ENCODE measurements at regions of chr11 and their contacts with region 1.

Region 1: GRCh38 chr11:43895601-43896000 is 15.0 kb downstream of the ALKBH3 start:
- DNase-seq: no peak
- H3K4me3 ChIP-seq: no peak overlapping the region
- H3K27ac ChIP-seq: no peak overlapping the region
- H3K4me1 ChIP-seq: no peaks in the 10 kb centered on the region
- H3K27me3 ChIP-seq: no peaks in the 10 kb centered on the region
- CTCF ChIP-seq: no peak
- POLR2A ChIP-seq: no peak

Region 2: DNA sequence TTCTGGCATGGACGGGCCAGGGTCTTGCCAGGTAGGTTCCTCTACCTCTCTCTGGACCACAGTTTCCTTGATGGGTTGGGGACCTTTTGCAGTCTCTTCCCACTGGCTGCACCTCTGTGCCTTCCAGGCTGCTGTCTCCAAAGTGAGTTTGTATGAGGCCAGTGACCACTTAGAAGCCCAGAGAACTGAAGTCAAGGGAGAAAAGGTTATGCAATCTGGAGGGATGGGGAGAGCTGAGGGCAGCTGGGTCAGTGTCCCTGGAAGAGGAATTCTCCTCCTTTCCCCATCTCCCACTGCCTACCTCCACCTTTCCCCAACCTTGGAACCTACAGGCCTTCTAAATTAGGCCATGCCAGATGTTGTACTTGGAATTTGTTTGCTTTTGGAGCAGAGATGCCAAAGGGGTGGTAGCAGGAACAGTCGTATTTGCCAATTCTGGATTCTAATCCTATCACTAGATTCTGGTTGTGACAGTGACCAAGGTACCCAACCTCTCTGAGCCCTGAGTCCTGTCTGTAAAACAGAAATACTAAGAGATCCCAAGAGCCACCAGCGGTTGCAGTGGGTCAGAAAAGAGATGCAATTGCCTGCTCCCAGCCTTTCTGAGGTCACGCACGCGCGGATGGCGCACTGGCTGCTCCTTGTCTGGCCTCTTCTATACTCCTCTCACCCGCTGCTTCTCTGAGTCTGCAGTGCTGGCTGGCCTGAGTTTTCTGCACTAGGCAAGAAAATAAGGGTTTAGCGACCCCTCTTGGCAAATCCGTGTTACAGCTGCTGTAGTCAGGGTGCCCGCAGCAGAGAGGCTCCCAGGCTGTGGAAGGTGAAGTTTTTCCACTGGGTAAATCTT is 141.4 kb after region 1 on chr11:
- intact Hi-C with region 1: loop called (anchors 2 kb)
- DNase-seq: peak; percentile 70 to 92
- H3K4me3 ChIP-seq: no peak overlapping the region
- H3K27ac ChIP-seq: peak overlapping the region; percentile 13
- H3K4me1 ChIP-seq: peaks cover 11% of the 10 kb centered on the region
- H3K27me3 ChIP-seq: no peaks in the 10 kb centered on the region
- CTCF ChIP-seq: peak; percentile 34 to 79 (median 79)
- POLR2A ChIP-seq: no peak

Measured in vagina (tissue), 2 donors.